Naive thymus-derived CD4-positive, alpha-beta T cell (primary cell): ENCODE measurements at regions of chr3 and their contacts with region 1.

Region 1: GRCh38 chr3:72847751-72848702 is at the start of gene SHQ1:
- DNase-seq: peak; percentile 87 to 94 (median 92)
- ATAC-seq: peak; percentile 96
- H3K4me3 ChIP-seq: peak within 1 kb of the TSS; percentile 92
- H3K4me3 Mint-ChIP-seq: peak within 1 kb of the TSS; percentile 93 to 100 (median 98)
- H3K27ac ChIP-seq: peak within 1 kb of the TSS; percentile 71
- H3K27ac Mint-ChIP-seq: peak within 1 kb of the TSS; percentile 80 to 92 (median 89)
- H3K4me1 ChIP-seq: peaks cover 14 to 16% of the 10 kb centered on the region in 2 donors
- H3K4me1 Mint-ChIP-seq: peaks cover 34 to 67% (median 51%) of the 10 kb centered on the region in 7 donors
- H3K27me3 ChIP-seq: no peaks in the 10 kb centered on the region
- H3K27me3 Mint-ChIP-seq: peaks cover 0 to 7% (median 0%) of the 10 kb centered on the region in 5 donors
- total RNA-seq, gene SHQ1: 14.1 to 34.3 (median 24.5) TPM

Region 2: GRCh38 chr3:72100601-72101187 is 747.3 kb before region 1 on chr3:
- CTCF ChIA-PET with region 1: no interaction called
- POLR2A ChIA-PET with region 1: no interaction called
- intact Hi-C with region 1: loop called in 1 of 2 experiments (anchors 2 kb)
- DNase-seq: peak; percentile 83 to 94 (median 90)
- ATAC-seq: peak; percentile 89
- H3K4me3 ChIP-seq: peak overlapping the region; percentile 56
- H3K4me3 Mint-ChIP-seq: peak overlapping the region; percentile 77 to 88 (median 83)
- H3K27ac ChIP-seq: peak overlapping the region; percentile 37
- H3K27ac Mint-ChIP-seq: peak overlapping the region; percentile 28 to 96 (median 83)
- H3K4me1 ChIP-seq: peaks cover 3 to 19% of the 10 kb centered on the region in 2 donors
- H3K4me1 Mint-ChIP-seq: peaks cover 24 to 38% (median 26%) of the 10 kb centered on the region in 7 donors
- H3K27me3 ChIP-seq: peaks cover 0 to 3% of the 10 kb centered on the region in 2 donors
- H3K27me3 Mint-ChIP-seq: peaks cover 0 to 7% (median 0%) of the 10 kb centered on the region in 5 donors

Region 3: GRCh38 chr3:72756900-72757299 is 91.1 kb before region 1 on chr3:
- CTCF ChIA-PET with region 1: no interaction called
- POLR2A ChIA-PET with region 1: no interaction called
- intact Hi-C with region 1: loop called in 1 of 2 experiments (anchors 1 kb)
- DNase-seq: peak in 8 of 9 donors; percentile 24 to 87 (median 83)
- ATAC-seq: peak; percentile 98
- H3K4me3 ChIP-seq: peak overlapping the region; percentile 37
- H3K4me3 Mint-ChIP-seq: peak overlapping the region; percentile 51 to 84 (median 76)
- H3K27ac ChIP-seq: peak overlapping the region; percentile 68
- H3K27ac Mint-ChIP-seq: peak overlapping the region; percentile 86 to 99 (median 97)
- H3K4me1 ChIP-seq: peaks cover 17 to 49% of the 10 kb centered on the region in 2 donors
- H3K4me1 Mint-ChIP-seq: peaks cover 28 to 89% (median 80%) of the 10 kb centered on the region in 7 donors
- H3K27me3 ChIP-seq: no peaks in the 10 kb centered on the region
- H3K27me3 Mint-ChIP-seq: no peaks in the 10 kb centered on the region

Region 4: DNA sequence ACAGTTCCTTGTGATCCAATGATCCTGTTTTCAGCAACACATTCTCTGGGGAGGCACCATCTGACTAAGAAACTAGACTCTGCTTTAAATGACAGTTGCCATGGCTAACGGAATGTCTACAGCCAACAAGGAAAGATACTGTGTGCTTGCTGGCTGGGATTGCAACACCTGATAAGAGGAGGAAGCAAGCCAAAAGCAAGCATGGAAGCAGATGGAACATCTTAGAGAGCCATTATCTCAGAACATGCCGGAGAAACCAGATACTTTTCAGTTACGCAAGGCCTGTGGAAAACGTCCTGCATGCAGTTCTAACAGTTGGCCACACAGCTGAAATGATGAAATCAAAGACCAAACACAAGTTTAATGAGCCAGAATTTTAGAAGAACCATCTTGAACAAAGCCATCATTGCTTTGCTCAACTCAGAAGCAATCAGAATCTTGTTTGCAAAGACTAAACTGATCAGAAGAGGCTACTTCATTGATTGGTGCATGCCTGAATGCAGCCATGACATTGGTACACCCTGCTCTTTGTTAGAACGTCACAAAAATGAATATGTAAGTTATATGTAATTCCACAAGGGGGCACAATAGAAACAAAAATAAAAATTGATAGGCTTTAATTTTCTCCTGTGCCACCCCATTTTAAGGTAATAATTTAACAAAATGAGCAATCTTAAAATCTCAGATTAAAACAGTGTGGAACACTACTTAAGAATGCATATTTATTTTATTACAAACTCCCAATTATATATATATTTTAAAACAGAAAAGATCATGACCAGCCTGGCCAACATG is 90.6 kb after region 1 on chr3:
- CTCF ChIA-PET with region 1: interaction called, 3 read pairs
- POLR2A ChIA-PET with region 1: no interaction called
- intact Hi-C with region 1: loop called in 1 of 2 experiments (anchors 2 kb)
- DNase-seq: peak in 7 of 9 donors; percentile 48 to 76 (median 62)
- ATAC-seq: peak; percentile 99
- H3K4me3 ChIP-seq: no peak overlapping the region
- H3K4me3 Mint-ChIP-seq: no peak overlapping the region
- H3K27ac ChIP-seq: no peak overlapping the region
- H3K27ac Mint-ChIP-seq: no peak overlapping the region
- H3K4me1 ChIP-seq: no peaks in the 10 kb centered on the region
- H3K4me1 Mint-ChIP-seq: no peaks in the 10 kb centered on the region
- H3K27me3 ChIP-seq: no peaks in the 10 kb centered on the region
- H3K27me3 Mint-ChIP-seq: peaks cover 0 to 28% (median 0%) of the 10 kb centered on the region in 5 donors

Region 5: DNA sequence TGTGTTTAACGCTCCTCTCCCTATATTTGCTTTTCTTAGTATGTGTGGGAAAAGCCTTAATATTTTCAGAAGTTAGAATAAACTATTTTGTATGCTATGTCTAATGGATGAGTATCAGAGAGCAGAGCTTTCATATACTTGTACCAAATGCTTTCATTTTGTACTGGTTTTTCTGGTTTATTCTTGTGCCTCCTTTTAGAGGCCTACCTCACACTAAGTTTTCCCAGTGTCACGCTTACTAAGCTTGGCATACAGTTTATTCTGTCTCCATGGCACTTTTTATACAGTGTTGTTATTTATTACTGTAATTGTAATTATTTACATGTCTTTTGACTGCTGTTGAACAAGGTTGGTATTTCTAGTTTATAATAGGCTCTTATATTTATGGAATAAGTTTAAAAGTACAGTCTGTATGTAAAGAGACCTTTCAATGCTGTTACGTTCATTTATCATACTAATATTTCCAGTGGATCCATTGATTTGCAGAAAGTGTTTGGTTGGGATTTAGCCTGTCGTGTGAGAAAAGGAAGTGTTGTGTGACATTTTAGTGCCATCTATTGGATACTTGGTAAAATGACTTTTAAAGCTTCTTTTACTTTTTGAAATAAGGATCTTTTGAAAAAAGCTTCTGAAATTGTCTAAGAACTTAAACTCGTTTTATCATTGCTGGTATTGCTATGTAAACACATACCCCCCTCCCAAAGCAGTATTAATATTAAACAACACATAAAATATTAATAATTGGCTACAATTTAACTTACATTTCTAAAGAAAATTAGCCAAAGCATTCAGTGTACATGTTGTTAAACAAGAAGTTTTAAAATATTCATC is 208.2 kb after region 1 on chr3:
- CTCF ChIA-PET with region 1: interaction called, 6 read pairs
- POLR2A ChIA-PET with region 1: no interaction called
- intact Hi-C with region 1: loop called (anchors 1 kb)
- DNase-seq: peak in 6 of 9 donors; percentile 16 to 52 (median 26)
- ATAC-seq: peak; percentile 54
- H3K4me3 ChIP-seq: no peak overlapping the region
- H3K4me3 Mint-ChIP-seq: no peak overlapping the region
- H3K27ac ChIP-seq: no peak overlapping the region
- H3K27ac Mint-ChIP-seq: peak overlapping the region in 6 of 9 donors; percentile 14 to 46 (median 30)
- H3K4me1 ChIP-seq: no peaks in the 10 kb centered on the region
- H3K4me1 Mint-ChIP-seq: peaks cover 8 to 30% (median 26%) of the 10 kb centered on the region in 7 donors
- H3K27me3 ChIP-seq: no peaks in the 10 kb centered on the region
- H3K27me3 Mint-ChIP-seq: no peaks in the 10 kb centered on the region

Region 6: GRCh38 chr3:73070675-73071575 is 222.9 kb after region 1 on chr3:
- CTCF ChIA-PET with region 1: no interaction called
- POLR2A ChIA-PET with region 1: no interaction called
- intact Hi-C with region 1: loop called in 1 of 2 experiments (anchors 5 kb)
- DNase-seq: no peak
- ATAC-seq: no peak
- H3K4me3 ChIP-seq: no peak overlapping the region
- H3K4me3 Mint-ChIP-seq: no peak overlapping the region
- H3K27ac ChIP-seq: no peak overlapping the region
- H3K27ac Mint-ChIP-seq: peak overlapping the region in 3 of 9 donors; percentile 39 to 59 (median 56)
- H3K4me1 ChIP-seq: no peaks in the 10 kb centered on the region
- H3K4me1 Mint-ChIP-seq: peaks cover 0 to 28% (median 23%) of the 10 kb centered on the region in 7 donors
- H3K27me3 ChIP-seq: no peaks in the 10 kb centered on the region
- H3K27me3 Mint-ChIP-seq: no peaks in the 10 kb centered on the region

Region 7: GRCh38 chr3:73086071-73086494 is 238.1 kb after region 1 on chr3:
- CTCF ChIA-PET with region 1: interaction called, 20 read pairs
- POLR2A ChIA-PET with region 1: interaction called, 3 read pairs
- intact Hi-C with region 1: loop called (anchors 1 kb)
- DNase-seq: peak; percentile 16 to 56 (median 43)
- ATAC-seq: peak; percentile 82
- H3K4me3 ChIP-seq: peak overlapping the region; percentile 11
- H3K4me3 Mint-ChIP-seq: peak overlapping the region in 8 of 10 donors; percentile 25 to 70 (median 57)
- H3K27ac ChIP-seq: no peak overlapping the region
- H3K27ac Mint-ChIP-seq: peak overlapping the region in 1 of 9 donors; percentile 42
- H3K4me1 ChIP-seq: peaks cover 0 to 8% of the 10 kb centered on the region in 2 donors
- H3K4me1 Mint-ChIP-seq: peaks cover 0 to 9% (median 7%) of the 10 kb centered on the region in 7 donors
- H3K27me3 ChIP-seq: no peaks in the 10 kb centered on the region
- H3K27me3 Mint-ChIP-seq: peaks cover 0 to 3% (median 0%) of the 10 kb centered on the region in 5 donors